Thyroid gland (tissue), 4 donors: ENCODE measurements at regions of chr20 and their contacts with region 1.

Region 1: GRCh38 chr20:49148601-49149000 is 39.5 kb downstream of the STAU1 start:
- DNase-seq: peak; percentile 82 to 84
- H3K4me3 ChIP-seq: no peak overlapping the region
- H3K27ac ChIP-seq: peak overlapping the region; percentile 27 to 74 (median 44)
- H3K4me1 ChIP-seq: peaks cover 28 to 39% of the 10 kb centered on the region in 2 donors
- H3K27me3 ChIP-seq: no peaks in the 10 kb centered on the region
- CTCF ChIP-seq: no peak
- POLR2A ChIP-seq: no peak

Region 2: DNA sequence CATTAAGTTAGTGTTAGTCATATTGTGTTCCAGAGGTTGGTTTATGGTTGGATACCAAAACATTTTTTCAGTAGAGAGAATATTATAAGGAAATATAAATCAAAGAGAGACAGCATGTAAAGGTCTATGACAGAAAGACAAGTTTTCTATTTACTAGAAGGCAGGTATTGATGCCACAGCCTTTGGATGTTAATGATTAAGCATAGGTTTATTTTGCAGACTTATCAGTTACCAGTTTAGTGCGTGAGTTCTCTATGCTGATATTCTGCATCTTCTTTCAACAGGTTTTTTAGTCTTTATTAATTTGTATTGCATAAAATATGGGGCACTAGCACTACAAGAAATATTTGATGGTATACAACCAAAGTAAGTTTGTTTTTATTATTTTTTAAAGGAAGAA is 56.8 kb before region 1 on chr20:
- intact Hi-C with region 1: no loop called
- DNase-seq: no peak
- H3K4me3 ChIP-seq: no peak overlapping the region
- H3K27ac ChIP-seq: no peak overlapping the region
- H3K4me1 ChIP-seq: no peaks in the 10 kb centered on the region
- H3K27me3 ChIP-seq: no peaks in the 10 kb centered on the region
- CTCF ChIP-seq: no peak
- POLR2A ChIP-seq: no peak

Region 3: GRCh38 chr20:49207076-49207475 is 58.5 kb after region 1 on chr20:
- intact Hi-C with region 1: loop called (anchors 5 kb)
- DNase-seq: no peak
- H3K4me3 ChIP-seq: no peak overlapping the region
- H3K27ac ChIP-seq: no peak overlapping the region
- H3K4me1 ChIP-seq: peaks cover 0 to 7% of the 10 kb centered on the region in 2 donors
- H3K27me3 ChIP-seq: no peaks in the 10 kb centered on the region
- CTCF ChIP-seq: no peak
- POLR2A ChIP-seq: no peak